ENCODE measurements at regions of chr16 and their contacts with region 1.

Region 1: GRCh38 chr16:78503602-78504001 is 404.1 kb downstream of the WWOX start:
- DNase-seq: peak in 1 of 2 donors; percentile 71
- H3K4me3 ChIP-seq: no peak overlapping the region
- CTCF ChIP-seq: peak in 1 of 3 donors; percentile 57
- POLR2A ChIP-seq: no peak

Region 2: GRCh38 chr16:78576941-78577340 is 73.3 kb after region 1 on chr16:
- intact Hi-C with region 1: no loop called
- DNase-seq: no peak
- H3K4me3 ChIP-seq: no peak overlapping the region
- CTCF ChIP-seq: no peak
- POLR2A ChIP-seq: no peak

Region 3: GRCh38 chr16:78761427-78761826 is 257.8 kb after region 1 on chr16:
- intact Hi-C with region 1: loop called (anchors 10 kb)
- DNase-seq: no peak
- H3K4me3 ChIP-seq: no peak overlapping the region
- CTCF ChIP-seq: no peak
- POLR2A ChIP-seq: no peak